ENCODE measurements at regions of chr3 and their contacts with region 1.

Region 1: DNA sequence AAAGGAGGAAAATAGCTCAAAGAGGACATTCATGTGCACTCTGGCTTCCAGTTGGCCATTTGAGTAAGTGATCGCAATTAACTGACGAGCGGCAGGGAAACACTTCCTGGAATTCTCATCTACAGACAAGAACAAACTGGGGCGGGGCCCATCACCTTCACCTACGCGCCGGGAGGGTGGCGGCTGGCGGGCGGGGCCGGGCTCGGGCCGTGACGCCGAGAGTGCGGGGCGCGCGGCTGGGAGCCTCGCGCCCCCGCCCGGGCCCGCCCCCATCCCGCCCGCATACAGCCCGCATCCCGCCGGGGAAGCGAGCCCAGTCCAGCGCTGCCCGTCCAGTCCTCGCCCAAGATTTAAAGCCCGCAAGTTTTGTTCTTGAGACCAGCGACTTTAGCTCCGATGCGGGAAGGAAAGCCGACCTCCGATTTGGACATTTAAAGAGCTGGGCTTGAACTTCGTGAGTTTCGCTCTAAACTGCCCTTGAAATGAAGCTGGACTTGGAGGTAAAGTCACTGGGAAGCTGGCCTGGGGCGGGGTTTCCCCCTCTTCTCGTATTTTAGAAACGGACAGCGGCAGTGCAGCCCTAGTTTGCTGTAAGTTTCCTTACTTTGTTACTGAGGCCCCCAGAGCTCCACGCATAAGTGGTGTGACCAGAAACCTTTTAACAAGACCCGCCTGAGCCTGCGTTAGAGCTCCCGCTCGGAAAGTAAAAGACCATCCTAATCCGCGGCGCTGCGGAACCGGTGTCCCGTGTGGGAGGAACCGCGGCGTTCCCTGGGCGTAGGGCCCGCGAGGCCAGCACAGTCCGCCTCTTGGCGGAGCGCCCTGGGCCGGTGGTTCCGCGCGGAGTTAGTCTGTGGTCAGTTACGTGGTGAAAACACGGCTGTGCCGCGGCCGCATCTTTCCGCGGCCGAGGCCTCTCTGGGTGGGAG is at the start of gene B3GNT5:
- DNase-seq: peak; percentile 67
- H3K4me3 Mint-ChIP-seq: peak within 1 kb of the TSS; percentile 76
- H3K27ac Mint-ChIP-seq: peak within 1 kb of the TSS; percentile 75
- H3K4me1 Mint-ChIP-seq: peaks cover 29% of the 10 kb centered on the region
- H3K27me3 Mint-ChIP-seq: peaks cover 2% of the 10 kb centered on the region
- total RNA-seq, gene B3GNT5: 15.0 to 18.8 TPM

Region 2: DNA sequence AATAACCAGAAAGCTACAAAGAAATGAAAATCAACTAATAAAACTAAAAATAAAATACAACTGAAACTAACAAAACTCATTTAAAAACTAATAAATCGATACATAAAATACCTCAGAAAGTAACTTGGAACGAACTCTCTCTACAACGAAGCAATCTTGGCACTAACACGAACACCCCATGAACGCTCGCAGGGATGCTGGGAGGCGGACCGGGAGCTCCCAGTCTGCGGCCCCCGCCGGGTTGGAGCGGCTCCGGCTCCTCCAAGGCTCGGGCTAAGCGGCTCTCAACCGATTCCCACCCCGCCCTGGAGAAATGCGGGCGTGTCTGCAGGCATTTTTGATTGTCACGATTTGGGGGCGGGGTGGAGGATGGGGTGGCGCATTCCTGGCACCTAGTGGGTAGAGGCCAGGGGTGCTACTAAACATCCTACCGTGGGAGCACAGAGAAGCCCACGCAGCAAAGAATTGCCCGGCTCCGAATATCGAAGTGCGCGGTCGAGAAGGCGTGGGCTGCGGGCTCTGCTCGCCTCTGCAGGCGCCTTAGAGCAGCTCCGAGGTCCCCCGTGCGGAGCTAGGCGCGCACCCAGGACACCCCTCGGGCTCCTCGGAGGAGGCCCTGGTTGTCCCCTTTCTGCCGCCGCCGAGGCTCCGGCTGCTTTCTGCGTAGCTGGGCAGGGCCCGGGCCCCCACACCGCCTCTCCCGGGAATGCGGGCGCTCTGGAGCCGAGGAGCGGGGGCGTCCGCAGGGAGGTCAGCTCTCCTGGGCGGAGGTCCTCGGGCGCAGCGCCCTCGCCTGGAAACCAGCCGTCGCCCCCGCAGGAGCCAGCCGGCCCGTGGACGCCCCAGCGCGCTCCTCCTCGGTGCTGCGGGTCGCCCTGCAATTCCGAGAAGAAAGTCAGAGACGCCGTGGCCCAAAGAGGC is 74.3 kb before region 1 on chr3:
- CTCF ChIA-PET with region 1: interaction called, 16 read pairs
- intact Hi-C with region 1: loop called (anchors 1 kb)
- DNase-seq: peak; percentile 84
- H3K4me3 Mint-ChIP-seq: peak overlapping the region; percentile 76
- H3K27ac Mint-ChIP-seq: no peak overlapping the region
- H3K4me1 Mint-ChIP-seq: peaks cover 11% of the 10 kb centered on the region
- H3K27me3 Mint-ChIP-seq: peaks cover 30% of the 10 kb centered on the region

Region 3: GRCh38 chr3:183265834-183266417 is 12.7 kb after region 1 on chr3:
- CTCF ChIA-PET with region 1: interaction called, 7 read pairs
- intact Hi-C with region 1: loop called (anchors 1 kb)
- DNase-seq: peak; percentile 80
- H3K4me3 Mint-ChIP-seq: no peak overlapping the region
- H3K27ac Mint-ChIP-seq: no peak overlapping the region
- H3K4me1 Mint-ChIP-seq: peaks cover 6% of the 10 kb centered on the region
- H3K27me3 Mint-ChIP-seq: no peaks in the 10 kb centered on the region

Region 4: DNA sequence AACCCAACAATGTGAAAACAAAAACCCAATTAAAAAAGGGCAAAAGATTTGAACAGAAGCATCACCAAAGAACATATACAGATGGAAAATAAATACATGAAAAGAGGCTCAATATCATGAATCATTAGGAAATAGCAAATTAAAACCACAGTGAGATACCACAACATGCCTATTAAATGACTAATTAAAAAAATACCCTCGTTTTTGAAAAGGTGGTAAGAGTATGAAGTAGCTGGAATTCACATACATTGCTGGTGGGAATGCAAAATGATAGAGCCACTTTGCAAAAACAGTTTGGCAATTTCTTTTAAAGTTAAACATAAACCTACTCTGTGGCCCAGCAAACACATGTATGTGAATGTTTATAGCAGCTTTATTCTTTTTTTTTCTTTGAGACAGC is 75.6 kb after region 1 on chr3:
- CTCF ChIA-PET with region 1: no interaction called
- intact Hi-C with region 1: loop called (anchors 5 kb)
- DNase-seq: no peak
- H3K4me3 Mint-ChIP-seq: no peak overlapping the region
- H3K27ac Mint-ChIP-seq: no peak overlapping the region
- H3K4me1 Mint-ChIP-seq: peaks cover 24% of the 10 kb centered on the region
- H3K27me3 Mint-ChIP-seq: no peaks in the 10 kb centered on the region

Region 5: GRCh38 chr3:183385698-183386613 is 132.7 kb after region 1 on chr3:
- CTCF ChIA-PET with region 1: interaction called, 18 read pairs
- intact Hi-C with region 1: loop called (anchors 1 kb)
- DNase-seq: peak; percentile 79
- H3K4me3 Mint-ChIP-seq: no peak overlapping the region
- H3K27ac Mint-ChIP-seq: no peak overlapping the region
- H3K4me1 Mint-ChIP-seq: peaks cover 9% of the 10 kb centered on the region
- H3K27me3 Mint-ChIP-seq: no peaks in the 10 kb centered on the region

Region 6: DNA sequence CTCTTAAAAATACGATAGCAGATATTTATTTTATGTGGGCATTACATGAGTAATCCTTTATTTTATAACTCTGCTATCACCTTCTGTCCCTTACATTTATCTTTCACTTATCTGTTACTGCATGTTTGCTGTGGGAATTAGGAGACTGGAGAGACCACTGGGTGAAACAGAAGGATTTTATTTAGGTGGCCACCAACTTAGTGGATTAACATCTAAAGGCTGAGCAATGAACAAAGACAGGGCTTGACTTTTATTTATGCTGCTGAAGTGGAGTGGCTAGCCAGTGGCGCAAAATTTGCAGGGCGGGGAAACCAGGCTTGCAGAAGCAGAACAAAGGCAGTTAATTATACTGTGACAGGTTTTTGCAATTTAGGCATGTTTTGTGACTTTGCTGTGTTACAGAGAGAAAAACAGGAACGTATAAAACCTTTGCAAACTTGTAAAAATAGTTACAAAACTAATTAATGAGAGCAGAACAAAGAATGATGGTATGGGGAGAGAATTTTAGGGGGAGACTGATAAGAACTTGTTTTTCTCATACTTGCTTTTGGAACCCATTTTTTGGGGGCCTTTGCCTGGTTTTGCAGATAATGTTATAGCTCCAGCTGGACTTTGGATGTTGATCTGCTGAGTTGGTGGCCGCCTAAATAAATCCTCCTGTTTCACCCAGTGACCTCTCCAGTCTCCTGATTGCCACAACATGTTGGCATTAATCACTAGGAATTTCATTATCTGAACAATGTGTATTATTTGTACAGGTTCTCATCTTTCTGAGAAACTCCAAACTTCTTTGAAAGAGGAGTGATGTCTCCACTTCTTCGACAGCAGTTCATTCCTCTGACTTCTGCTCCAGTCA is 400.2 kb after region 1 on chr3:
- CTCF ChIA-PET with region 1: no interaction called
- intact Hi-C with region 1: no loop called
- DNase-seq: peak; percentile 15
- H3K4me3 Mint-ChIP-seq: no peak overlapping the region
- H3K27ac Mint-ChIP-seq: no peak overlapping the region
- H3K4me1 Mint-ChIP-seq: peaks cover 5% of the 10 kb centered on the region
- H3K27me3 Mint-ChIP-seq: no peaks in the 10 kb centered on the region